ENCODE measurements at regions of chr2 and their contacts with region 1.

Region 1: GRCh38 chr2:172745636-172746035 is 10.0 kb downstream of the RAPGEF4 start:
- DNase-seq: no peak
- H3K4me3 ChIP-seq: no peak overlapping the region
- H3K4me3 Mint-ChIP-seq: no peak overlapping the region
- H3K27ac ChIP-seq: no peak overlapping the region
- H3K27ac Mint-ChIP-seq: no peak overlapping the region
- H3K4me1 ChIP-seq: no peaks in the 10 kb centered on the region
- H3K4me1 Mint-ChIP-seq: no peaks in the 10 kb centered on the region
- H3K27me3 ChIP-seq: peaks cover 3% of the 10 kb centered on the region
- H3K27me3 Mint-ChIP-seq: peaks cover 13 to 24% of the 10 kb centered on the region in 2 donors

Region 2: GRCh38 chr2:171459496-171459895 is 1286.1 kb before region 1 on chr2:
- CTCF ChIA-PET with region 1: no interaction called
- POLR2A ChIA-PET with region 1: no interaction called
- intact Hi-C with region 1: loop called (anchors 5 kb)
- DNase-seq: no peak
- H3K4me3 ChIP-seq: no peak overlapping the region
- H3K4me3 Mint-ChIP-seq: no peak overlapping the region
- H3K27ac ChIP-seq: no peak overlapping the region
- H3K27ac Mint-ChIP-seq: no peak overlapping the region
- H3K4me1 ChIP-seq: no peaks in the 10 kb centered on the region
- H3K4me1 Mint-ChIP-seq: peaks cover 0 to 7% (median 4%) of the 10 kb centered on the region in 4 donors
- H3K27me3 ChIP-seq: no peaks in the 10 kb centered on the region
- H3K27me3 Mint-ChIP-seq: no peaks in the 10 kb centered on the region

Region 3: DNA sequence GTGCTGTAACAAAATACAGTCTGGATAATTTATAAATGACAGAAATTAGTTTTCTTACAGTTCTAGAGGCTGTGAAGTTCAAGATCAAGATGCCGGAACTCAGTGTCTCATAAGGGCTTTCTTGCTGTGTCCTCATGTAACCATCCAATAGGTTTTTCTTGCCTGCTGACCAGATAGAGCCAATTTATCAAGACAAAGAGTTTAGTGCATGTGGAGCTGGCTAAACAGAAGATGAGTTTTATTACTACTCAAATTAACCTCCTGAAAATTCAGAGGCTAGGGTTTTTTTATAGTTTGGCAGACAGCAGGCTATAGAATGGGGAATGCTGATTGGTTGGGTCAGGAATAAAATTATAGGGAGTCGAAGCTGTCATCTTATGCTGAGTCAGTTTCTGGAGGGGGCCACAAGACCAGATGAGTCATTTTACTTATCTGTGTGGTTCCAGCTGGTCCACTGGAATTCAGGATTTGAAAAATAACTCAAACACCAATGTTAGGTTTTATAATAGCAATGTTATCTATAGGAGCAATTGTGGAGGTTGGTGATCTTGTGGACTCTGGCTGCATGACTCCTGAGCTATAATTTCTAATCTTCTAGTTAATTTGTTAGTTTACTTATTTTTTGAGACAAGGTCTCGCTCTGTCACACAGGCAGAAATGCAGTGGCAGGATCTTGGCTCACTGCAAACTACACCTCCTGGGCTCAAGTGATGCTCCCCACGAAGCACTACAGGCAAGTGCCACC is 192.9 kb before region 1 on chr2:
- CTCF ChIA-PET with region 1: no interaction called
- POLR2A ChIA-PET with region 1: no interaction called
- intact Hi-C with region 1: no loop called
- DNase-seq: no peak
- H3K4me3 ChIP-seq: no peak overlapping the region
- H3K4me3 Mint-ChIP-seq: no peak overlapping the region
- H3K27ac ChIP-seq: no peak overlapping the region
- H3K27ac Mint-ChIP-seq: no peak overlapping the region
- H3K4me1 ChIP-seq: peaks cover 40% of the 10 kb centered on the region
- H3K4me1 Mint-ChIP-seq: peaks cover 33 to 58% (median 48%) of the 10 kb centered on the region in 4 donors
- H3K27me3 ChIP-seq: no peaks in the 10 kb centered on the region
- H3K27me3 Mint-ChIP-seq: peaks cover 0 to 1% of the 10 kb centered on the region in 2 donors

Region 4: DNA sequence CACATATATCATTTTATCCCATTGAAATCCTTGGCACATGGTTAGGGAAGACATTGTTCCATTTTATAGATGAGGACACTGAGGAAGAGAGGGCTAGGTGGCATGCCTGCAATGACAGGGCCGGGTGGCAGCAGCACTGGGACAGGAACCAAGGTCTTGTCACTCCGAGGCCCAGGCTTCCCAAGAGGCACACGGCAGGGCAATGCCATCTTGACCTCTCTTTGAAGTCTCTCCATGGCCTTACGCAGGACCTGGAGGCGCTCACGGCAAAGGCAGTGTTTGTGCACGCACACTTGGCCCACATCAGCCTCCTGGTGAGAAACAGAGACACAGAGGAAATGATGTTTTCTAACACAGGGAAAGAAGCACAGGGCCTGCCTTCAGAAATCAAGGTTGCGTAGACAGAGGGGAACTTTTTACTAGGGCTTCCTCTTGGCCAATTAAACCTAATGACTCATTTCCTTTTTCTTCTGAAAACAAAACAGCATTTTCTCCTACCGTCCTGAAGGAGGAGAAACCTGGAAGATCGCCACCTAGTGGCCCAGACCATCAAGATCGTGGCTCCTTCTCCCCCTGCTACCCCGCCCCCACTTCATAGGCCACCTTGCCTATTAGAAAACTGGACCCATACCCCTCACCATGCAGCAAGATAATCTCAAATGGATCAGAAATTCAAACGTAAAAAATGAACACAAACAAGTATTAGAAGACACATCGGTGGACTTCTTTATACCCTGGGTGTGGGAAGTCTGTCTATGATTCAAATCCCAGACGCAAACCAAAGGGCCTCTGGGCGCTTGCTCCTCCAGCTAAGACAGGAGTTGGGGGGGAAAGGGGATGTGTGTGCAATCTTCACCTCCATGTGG is 1294.1 kb after region 1 on chr2:
- CTCF ChIA-PET with region 1: no interaction called
- POLR2A ChIA-PET with region 1: no interaction called
- intact Hi-C with region 1: no loop called
- DNase-seq: peak; percentile 76 to 86 (median 78)
- H3K4me3 ChIP-seq: peak overlapping the region in 1 of 2 donors; percentile 45
- H3K4me3 Mint-ChIP-seq: peak overlapping the region; percentile 12 to 79 (median 53)
- H3K27ac ChIP-seq: peak overlapping the region; percentile 73
- H3K27ac Mint-ChIP-seq: peak overlapping the region; percentile 73 to 94 (median 89)
- H3K4me1 ChIP-seq: peaks cover 10% of the 10 kb centered on the region
- H3K4me1 Mint-ChIP-seq: peaks cover 8 to 10% (median 8%) of the 10 kb centered on the region in 4 donors
- H3K27me3 ChIP-seq: no peaks in the 10 kb centered on the region
- H3K27me3 Mint-ChIP-seq: peaks cover 1 to 3% of the 10 kb centered on the region in 2 donors

Measured in CD4-positive, alpha-beta memory T cell (primary cell).